ENCODE measurements at regions of chr11 and their contacts with region 1.

Region 1: DNA sequence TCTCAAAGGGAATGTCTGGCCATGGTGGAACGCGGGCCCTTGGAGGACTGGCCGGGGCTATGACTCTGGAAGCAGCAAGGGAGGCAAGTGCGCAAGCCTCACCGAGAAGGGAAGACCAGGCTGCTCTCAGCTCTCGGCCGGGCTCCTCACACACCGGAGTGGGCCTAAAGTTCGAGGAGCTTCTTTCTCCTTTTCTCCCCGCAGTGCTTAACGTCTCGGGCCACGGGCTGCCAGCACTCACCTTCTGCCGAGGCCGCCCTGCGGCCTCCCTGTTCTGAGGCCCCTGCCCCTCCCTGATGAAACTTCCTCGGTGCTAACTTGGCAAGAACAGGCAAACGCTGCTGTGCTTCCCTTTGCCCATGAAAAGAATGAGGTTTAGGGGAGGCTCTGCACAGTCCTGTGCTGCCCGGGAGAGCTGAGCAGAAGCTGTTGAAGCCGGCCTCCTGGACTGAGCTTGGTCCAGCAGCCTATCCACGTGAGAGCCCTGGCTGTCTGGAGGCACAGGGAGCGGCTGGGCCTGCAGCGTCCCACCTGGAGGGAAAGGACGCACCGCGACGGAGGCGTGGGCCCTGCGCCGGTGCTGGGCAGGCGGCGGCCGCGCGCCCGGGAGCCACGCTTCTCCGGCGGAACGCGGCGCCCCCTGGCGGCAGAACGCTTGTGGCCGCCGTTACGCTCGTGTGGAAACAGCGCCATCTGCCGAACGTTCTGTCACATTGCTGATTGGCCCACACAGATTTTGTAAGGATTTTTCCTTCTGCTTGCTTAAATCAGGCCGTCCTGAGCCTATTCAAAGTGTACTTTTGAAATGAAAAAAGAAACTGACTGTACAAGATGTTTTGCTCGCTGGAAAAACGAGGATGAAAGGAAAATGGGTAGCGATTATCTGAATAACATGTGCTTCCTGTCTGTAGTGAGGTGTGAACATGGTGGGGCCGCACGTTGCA is 65.0 kb upstream of the TMEM45B start:
- DNase-seq: peak; percentile 74
- ATAC-seq: peak; percentile 98
- H3K4me3 ChIP-seq: no peak overlapping the region
- H3K27ac ChIP-seq: no peak overlapping the region
- H3K4me1 ChIP-seq: peaks cover 0 to 5% of the 10 kb centered on the region in 2 experiments; a peak in 2 of 4 replicates
- H3K27me3 ChIP-seq: no peaks in the 10 kb centered on the region
- CTCF ChIP-seq: peak; percentile 75 to 99 (median 91)
- POLR2A ChIP-seq: no peak
- RAD21 ChIP-seq: peak; percentile 97

Region 2: DNA sequence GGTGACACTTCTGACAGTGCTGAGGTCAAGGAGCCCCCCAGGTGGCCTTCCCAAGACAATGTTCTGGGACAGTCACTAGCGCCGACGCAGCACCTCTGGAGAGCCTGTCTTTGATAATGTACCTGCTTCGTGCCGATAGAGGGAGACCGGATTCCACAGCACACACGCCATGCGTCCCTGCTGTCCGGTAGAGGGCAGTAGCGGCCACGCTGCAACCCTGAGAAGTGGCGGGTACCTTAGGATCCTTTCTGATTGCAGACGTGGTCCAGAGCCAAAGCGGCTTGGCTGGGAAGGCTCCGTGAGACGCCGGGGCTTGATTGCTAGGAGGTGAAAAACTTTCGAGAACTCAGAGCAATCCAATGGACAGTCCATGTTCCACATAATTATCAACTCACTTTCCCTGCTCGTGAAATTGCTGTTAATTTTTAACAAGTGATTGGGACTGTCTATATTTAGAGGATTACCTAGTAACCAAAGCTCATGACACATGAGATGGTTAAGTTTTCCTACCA is 386.4 kb before region 1 on chr11:
- CTCF ChIA-PET with region 1: interaction called, 7 read pairs
- POLR2A ChIA-PET with region 1: no interaction called
- RAD21 ChIA-PET with region 1: no interaction called
- intact Hi-C with region 1: loop called (anchors 1 kb)
- DNase-seq: peak; percentile 85
- ATAC-seq: peak; percentile 99
- H3K4me3 ChIP-seq: no peak overlapping the region
- H3K27ac ChIP-seq: no peak overlapping the region
- H3K4me1 ChIP-seq: peaks cover 0 to 20% of the 10 kb centered on the region in 2 experiments; a peak in 2 of 4 replicates
- H3K27me3 ChIP-seq: peaks cover 32% of the 10 kb centered on the region
- CTCF ChIP-seq: peak; percentile 100
- POLR2A ChIP-seq: no peak
- RAD21 ChIP-seq: peak; percentile 99

Region 3: DNA sequence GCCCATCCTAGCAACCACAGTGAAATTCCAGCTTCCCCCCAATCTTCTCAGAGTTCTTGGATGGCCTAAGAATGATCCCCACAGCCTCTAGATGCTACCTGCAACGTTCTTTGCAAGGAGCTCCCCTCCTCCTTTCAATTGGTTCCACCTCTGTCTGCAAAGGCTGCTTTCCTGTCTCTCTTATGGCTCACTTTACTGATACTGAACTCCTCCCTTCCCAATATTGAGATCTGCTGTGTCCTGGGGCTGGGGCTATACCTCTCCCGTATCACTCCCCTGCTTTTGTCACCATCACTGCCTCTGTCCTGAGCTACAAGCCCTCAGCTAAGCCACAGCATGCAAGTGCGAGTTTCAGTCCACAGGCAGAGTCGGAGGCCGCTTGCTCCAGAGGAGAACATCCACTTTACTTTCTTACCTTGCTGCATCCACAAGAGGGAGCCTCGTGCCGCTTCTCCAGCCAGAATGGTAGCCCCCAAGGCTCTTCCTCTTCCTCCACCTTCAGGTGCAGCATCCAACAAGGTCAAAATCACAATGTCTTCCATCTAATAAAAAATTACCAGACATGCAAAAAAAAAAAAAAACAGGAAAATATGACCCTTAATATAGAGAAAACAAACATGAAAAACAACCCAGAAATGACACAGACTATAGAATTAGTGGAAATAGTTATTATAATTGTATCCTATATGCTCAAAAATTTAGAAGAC is 16.4 kb after region 1 on chr11:
- CTCF ChIA-PET with region 1: no interaction called
- POLR2A ChIA-PET with region 1: no interaction called
- RAD21 ChIA-PET with region 1: no interaction called
- intact Hi-C with region 1: no loop called
- DNase-seq: peak; percentile 44
- ATAC-seq: peak; percentile 89
- H3K4me3 ChIP-seq: no peak overlapping the region
- H3K27ac ChIP-seq: no peak overlapping the region
- H3K4me1 ChIP-seq: peaks cover 0 to 13% of the 10 kb centered on the region in 2 experiments; a peak in 1 of 4 replicates
- H3K27me3 ChIP-seq: no peaks in the 10 kb centered on the region
- CTCF ChIP-seq: peak; percentile 49 to 70 (median 61); a peak in 5 of 6 replicates
- POLR2A ChIP-seq: no peak
- RAD21 ChIP-seq: peak; percentile 72